MCF 10A (cell line): ENCODE measurements at regions of chr1 and their contacts with region 1.

Region 1: GRCh38 chr1:180533266-180533987 is 25.3 kb upstream of the OVAAL start:
- DNase-seq: peak; percentile 88
- H3K4me3 Mint-ChIP-seq: no peak overlapping the region
- H3K27ac Mint-ChIP-seq: no peak overlapping the region
- H3K4me1 Mint-ChIP-seq: peaks cover 43% of the 10 kb centered on the region
- H3K27me3 Mint-ChIP-seq: no peaks in the 10 kb centered on the region
- CTCF ChIP-seq: peak; percentile 90

Region 2: DNA sequence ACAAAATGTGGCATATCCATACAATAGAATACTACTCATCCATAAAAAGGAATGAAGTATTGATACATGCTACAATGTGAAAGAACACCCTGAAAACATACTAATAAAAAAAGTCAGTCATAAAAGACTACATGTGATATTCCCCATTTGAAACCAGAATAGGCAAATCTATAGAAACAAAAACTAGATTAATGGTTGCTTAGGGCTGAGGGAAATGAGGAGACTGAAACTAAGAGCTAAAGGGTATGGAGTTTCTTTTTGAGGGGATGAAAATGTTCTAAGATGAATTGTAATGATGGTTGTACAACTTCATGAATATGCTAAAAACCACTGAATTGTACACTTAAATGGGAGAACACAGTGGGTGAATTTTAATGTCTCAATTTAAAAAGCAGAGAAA is 81.9 kb before region 1 on chr1:
- CTCF ChIA-PET with region 1: no interaction called
- POLR2A ChIA-PET with region 1: no interaction called
- intact Hi-C with region 1: no loop called
- DNase-seq: no peak
- H3K4me3 Mint-ChIP-seq: no peak overlapping the region
- H3K27ac Mint-ChIP-seq: no peak overlapping the region
- H3K4me1 Mint-ChIP-seq: no peaks in the 10 kb centered on the region
- H3K27me3 Mint-ChIP-seq: no peaks in the 10 kb centered on the region
- CTCF ChIP-seq: no peak

Region 3: GRCh38 chr1:180502360-180503273 is 30.8 kb before region 1 on chr1 and contains the start of gene ACBD6:
- CTCF ChIA-PET with region 1: interaction called, 4 read pairs
- POLR2A ChIA-PET with region 1: interaction called, 10 read pairs
- intact Hi-C with region 1: no loop called
- DNase-seq: peak; percentile 94
- H3K4me3 Mint-ChIP-seq: peak within 1 kb of the TSS; percentile 94
- H3K27ac Mint-ChIP-seq: peak within 1 kb of the TSS; percentile 97
- H3K4me1 Mint-ChIP-seq: peaks cover 29% of the 10 kb centered on the region
- H3K27me3 Mint-ChIP-seq: no peaks in the 10 kb centered on the region
- CTCF ChIP-seq: no peak
- total RNA-seq, gene ACBD6: 123 and 136 TPM in 2 replicates

Region 4: DNA sequence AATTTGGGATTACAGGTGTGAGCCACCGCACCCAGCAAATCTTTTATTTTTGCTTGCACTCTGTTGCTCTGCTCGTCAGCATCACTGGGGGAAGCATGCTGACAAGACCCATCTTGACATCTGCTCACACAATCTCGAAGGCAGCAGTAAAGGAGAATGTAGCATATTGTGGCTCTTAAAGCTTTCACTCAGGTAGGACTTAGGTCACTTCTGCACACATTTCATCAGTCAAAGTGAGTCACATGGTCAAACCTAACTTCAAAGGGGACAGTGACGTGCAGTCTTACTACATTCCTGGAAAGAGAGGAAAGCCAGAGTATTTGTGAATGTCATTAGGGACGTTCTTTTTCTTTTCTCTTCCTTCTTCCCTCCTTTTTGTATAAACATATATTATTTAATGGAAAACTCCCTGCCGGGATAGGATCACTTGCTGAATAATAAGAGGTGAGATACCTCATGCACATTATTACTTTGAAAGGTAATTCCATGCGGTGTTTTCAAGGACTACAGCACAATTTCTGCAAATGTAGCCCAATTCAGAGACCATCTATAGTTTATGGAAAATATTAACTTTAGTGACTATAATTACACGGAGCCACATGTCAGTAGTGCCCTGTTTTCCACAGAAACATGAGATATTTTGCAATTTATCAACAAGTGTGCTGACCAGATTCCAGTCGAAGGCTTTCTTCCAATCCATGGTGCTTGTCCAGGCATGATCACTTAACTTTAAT is 11.8 kb before region 1 on chr1:
- CTCF ChIA-PET with region 1: interaction called, 77 read pairs
- POLR2A ChIA-PET with region 1: interaction called, 56 read pairs
- intact Hi-C with region 1: loop called (anchors 2 kb)
- DNase-seq: peak; percentile 96
- H3K4me3 Mint-ChIP-seq: peak overlapping the region; percentile 34
- H3K27ac Mint-ChIP-seq: peak overlapping the region; percentile 82
- H3K4me1 Mint-ChIP-seq: peaks cover 61% of the 10 kb centered on the region
- H3K27me3 Mint-ChIP-seq: no peaks in the 10 kb centered on the region
- CTCF ChIP-seq: no peak

Region 5: DNA sequence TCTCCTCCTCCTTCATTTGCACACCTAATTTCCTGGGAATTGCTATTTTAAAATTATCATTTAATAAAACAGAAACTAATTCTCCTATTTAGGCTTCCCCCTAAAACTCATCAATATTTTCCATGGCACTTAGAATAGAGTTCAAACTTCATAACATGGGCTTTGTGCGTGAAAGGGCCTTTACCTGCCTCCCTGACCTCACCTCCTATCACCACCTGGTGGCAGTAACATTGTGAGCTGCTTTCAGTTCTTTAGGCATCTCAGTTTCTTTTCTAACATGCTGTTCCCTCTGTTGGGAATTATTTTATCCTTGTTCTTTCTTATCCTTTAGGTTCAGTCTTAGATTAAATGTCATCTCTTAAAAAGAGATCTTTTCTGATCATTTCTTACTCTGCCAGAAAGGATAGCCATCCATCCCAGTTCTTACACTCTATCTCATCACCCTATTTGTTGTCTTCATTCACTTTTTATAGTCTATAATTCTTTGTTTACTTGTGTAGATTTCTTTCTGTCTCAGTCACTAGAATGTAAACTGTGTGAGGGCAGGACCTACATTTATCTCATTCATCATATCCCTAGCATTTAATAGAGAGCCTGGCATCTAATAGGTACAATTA is 245.5 kb after region 1 on chr1:
- CTCF ChIA-PET with region 1: interaction called, 4 read pairs
- POLR2A ChIA-PET with region 1: interaction called, 3 read pairs
- intact Hi-C with region 1: loop called (anchors 2 kb)
- DNase-seq: peak; percentile 59
- H3K4me3 Mint-ChIP-seq: no peak overlapping the region
- H3K27ac Mint-ChIP-seq: no peak overlapping the region
- H3K4me1 Mint-ChIP-seq: peaks cover 9% of the 10 kb centered on the region
- H3K27me3 Mint-ChIP-seq: no peaks in the 10 kb centered on the region
- CTCF ChIP-seq: peak; percentile 57